Activated CD4-positive, alpha-beta memory T cell treated with anti-CD3 and anti-CD28 coated beads, Interleukin-2, amount 10 ng/mL, durations not matched to agents 7 days and 5 days (primary cell): ENCODE measurements at regions of chr12 and their contacts with region 1.

Region 1: DNA sequence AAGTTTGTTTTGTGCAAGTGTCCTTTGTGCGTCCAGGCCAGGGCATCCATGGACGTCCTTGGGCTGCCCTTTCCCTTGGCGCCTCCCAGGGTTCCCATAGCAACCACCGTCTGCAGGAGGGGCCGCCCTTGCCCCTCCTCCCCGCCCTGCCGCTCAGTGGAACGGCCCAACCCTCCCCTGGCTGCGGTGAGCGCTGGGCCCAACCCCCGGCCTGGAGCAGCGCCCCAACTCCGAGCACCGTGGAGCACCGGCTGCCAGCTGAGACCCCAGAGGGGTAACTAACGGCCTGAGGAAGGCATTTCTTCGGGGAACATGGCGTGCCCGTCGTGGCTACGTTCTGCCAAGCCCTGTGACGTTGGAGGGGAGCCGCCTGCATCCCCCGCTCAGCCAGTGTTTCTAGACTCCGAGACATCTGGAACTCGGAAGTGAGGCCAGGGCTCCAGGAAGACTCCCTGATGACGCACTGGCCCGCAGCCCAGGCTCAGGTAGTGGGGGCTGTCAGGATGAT is 5.3 kb upstream of the ACACB start:
- DNase-seq: peak; percentile 61
- H3K4me3 Mint-ChIP-seq: peak overlapping the region; percentile 66
- H3K27ac Mint-ChIP-seq: peak overlapping the region; percentile 63
- H3K4me1 Mint-ChIP-seq: peaks cover 11% of the 10 kb centered on the region
- H3K27me3 Mint-ChIP-seq: no peaks in the 10 kb centered on the region

Region 2: GRCh38 chr12:108514973-108515814 is 595.8 kb before region 1 on chr12 and contains the start of gene FICD:
- CTCF ChIA-PET with region 1: no interaction called
- POLR2A ChIA-PET with region 1: no interaction called
- DNase-seq: peak; percentile 100
- H3K4me3 Mint-ChIP-seq: peak within 1 kb of the TSS; percentile 84
- H3K27ac Mint-ChIP-seq: peak within 1 kb of the TSS; percentile 72
- H3K4me1 Mint-ChIP-seq: peaks cover 39% of the 10 kb centered on the region
- H3K27me3 Mint-ChIP-seq: no peaks in the 10 kb centered on the region
- total RNA-seq, gene FICD: 6.3 to 7.1 TPM

Region 3: GRCh38 chr12:109093022-109093918 is 17.8 kb before region 1 on chr12 and contains the start of gene ALKBH2:
- CTCF ChIA-PET with region 1: interaction called, 24 read pairs
- POLR2A ChIA-PET with region 1: interaction called, 6 read pairs
- DNase-seq: peak; percentile 94
- H3K4me3 Mint-ChIP-seq: peak within 1 kb of the TSS; percentile 73
- H3K27ac Mint-ChIP-seq: peak within 1 kb of the TSS; percentile 44
- H3K4me1 Mint-ChIP-seq: peaks cover 45% of the 10 kb centered on the region
- H3K27me3 Mint-ChIP-seq: no peaks in the 10 kb centered on the region
- total RNA-seq, gene ALKBH2: 8.2 to 8.7 TPM

Region 4: DNA sequence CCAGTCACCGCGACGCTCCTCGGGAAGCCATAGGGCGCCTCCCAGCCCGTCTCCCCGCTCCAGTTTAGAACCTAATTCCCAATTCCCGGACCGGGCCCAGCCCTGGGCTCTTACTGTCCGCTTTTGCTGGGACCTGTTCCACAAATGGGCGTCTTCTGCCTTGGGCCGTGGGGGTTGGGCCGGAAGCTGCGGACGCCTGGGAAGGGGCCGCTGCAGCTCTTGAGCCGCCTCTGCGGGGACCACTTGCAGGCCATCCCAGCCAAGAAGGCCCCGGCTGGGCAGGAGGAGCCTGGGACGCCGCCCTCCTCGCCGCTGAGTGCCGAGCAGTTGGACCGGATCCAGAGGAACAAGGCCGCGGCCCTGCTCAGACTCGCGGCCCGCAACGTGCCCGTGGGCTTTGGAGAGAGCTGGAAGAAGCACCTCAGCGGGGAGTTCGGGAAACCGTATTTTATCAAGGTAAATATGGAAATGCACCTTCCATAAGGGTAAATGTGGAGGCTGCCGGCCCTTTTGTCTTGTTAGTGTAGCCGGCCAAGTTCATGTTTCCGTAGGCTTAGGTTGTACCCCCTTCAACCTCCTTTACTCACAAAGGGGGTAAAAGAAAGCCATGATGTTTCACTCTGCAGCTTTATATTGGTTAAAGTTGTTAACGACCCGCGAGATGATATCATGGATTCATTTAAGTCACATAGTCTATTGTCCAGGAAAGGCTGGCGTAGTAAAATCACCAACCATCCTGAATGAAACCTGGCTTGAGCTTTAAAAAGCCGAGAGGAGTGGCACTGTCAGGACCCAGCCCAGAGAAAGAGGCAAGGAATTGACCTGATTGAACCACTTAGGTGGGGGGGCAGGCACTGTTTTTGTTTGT is 12.6 kb before region 1 on chr12:
- CTCF ChIA-PET with region 1: interaction called, 24 read pairs
- POLR2A ChIA-PET with region 1: interaction called, 6 read pairs
- DNase-seq: peak; percentile 14
- H3K4me3 Mint-ChIP-seq: peak overlapping the region; percentile 77
- H3K27ac Mint-ChIP-seq: peak overlapping the region; percentile 62
- H3K4me1 Mint-ChIP-seq: peaks cover 41% of the 10 kb centered on the region
- H3K27me3 Mint-ChIP-seq: no peaks in the 10 kb centered on the region

Region 5: DNA sequence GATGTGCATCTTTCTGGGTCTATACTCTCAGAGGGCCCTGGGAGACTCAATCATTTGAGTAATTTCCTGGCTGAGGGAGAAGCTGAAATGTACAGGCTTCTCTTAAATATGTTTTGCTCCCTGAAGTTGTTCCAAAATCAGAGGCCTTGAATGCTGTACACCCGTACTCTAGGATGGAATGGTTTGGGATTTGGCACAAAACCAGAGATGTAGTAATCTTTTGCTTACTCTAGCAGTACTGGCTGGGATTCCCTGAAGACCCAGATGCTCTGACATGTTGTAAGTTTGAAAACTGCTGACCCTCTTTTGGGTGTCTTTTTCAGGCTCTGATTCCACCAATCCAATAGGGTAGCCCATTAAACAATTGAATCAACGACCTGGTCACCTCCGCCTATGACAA is 15.7 kb after region 1 on chr12:
- CTCF ChIA-PET with region 1: interaction called, 19 read pairs
- POLR2A ChIA-PET with region 1: no interaction called
- DNase-seq: no peak
- H3K4me3 Mint-ChIP-seq: no peak overlapping the region
- H3K27ac Mint-ChIP-seq: no peak overlapping the region
- H3K4me1 Mint-ChIP-seq: no peaks in the 10 kb centered on the region
- H3K27me3 Mint-ChIP-seq: peaks cover 1% of the 10 kb centered on the region